Activated CD4-positive, alpha-beta T cell treated with anti-CD3 and anti-CD28 coated beads, Interleukin-2, amount 10 ng/mL, durations not matched to agents 24 days and 14 days (primary cell): ENCODE measurements at regions of chr3 and their contacts with region 1.

Region 1: DNA sequence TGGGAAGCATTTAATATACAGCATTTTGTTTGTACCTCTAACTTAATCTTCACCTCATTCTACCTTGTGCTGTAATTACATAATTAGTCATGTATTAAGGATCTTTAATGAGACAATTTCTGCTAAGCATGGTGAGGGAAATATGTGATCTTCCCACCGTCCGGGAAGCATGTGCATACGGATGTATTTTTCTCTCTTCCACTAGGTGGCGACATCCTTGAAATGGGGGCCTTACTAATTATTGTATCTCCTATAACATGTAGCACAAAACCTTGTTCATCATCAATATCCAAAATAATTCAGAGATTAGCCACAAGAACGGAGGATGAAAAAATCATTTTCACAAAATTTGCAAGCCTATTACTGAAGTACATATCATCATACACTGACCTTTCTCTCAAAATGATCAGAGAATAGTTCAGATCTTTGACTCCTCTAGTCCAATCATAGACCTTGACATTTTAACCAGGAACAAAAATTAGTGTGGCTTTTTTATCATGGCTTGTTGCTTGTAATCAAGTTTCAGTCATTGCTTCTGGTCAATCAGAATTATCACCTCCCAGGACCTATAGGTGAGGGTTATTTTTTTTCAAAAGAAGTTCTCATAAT is 148.9 kb upstream of the GBE1 start:
- DNase-seq: peak; percentile 71
- H3K4me3 Mint-ChIP-seq: no peak overlapping the region
- H3K27ac Mint-ChIP-seq: no peak overlapping the region
- H3K4me1 Mint-ChIP-seq: no peaks in the 10 kb centered on the region
- H3K27me3 Mint-ChIP-seq: no peaks in the 10 kb centered on the region

Region 2: GRCh38 chr3:81490541-81491288 is 419.6 kb before region 1 on chr3:
- intact Hi-C with region 1: loop called (anchors 10 kb)
- DNase-seq: peak; percentile 91
- H3K4me3 Mint-ChIP-seq: no peak overlapping the region
- H3K27ac Mint-ChIP-seq: no peak overlapping the region
- H3K4me1 Mint-ChIP-seq: peaks cover 2% of the 10 kb centered on the region
- H3K27me3 Mint-ChIP-seq: no peaks in the 10 kb centered on the region

Region 3: GRCh38 chr3:81666493-81667121 is 243.7 kb before region 1 on chr3:
- intact Hi-C with region 1: loop called (anchors 5 kb)
- DNase-seq: no peak
- H3K4me3 Mint-ChIP-seq: no peak overlapping the region
- H3K27ac Mint-ChIP-seq: no peak overlapping the region
- H3K4me1 Mint-ChIP-seq: peaks cover 8% of the 10 kb centered on the region
- H3K27me3 Mint-ChIP-seq: no peaks in the 10 kb centered on the region

Region 4: DNA sequence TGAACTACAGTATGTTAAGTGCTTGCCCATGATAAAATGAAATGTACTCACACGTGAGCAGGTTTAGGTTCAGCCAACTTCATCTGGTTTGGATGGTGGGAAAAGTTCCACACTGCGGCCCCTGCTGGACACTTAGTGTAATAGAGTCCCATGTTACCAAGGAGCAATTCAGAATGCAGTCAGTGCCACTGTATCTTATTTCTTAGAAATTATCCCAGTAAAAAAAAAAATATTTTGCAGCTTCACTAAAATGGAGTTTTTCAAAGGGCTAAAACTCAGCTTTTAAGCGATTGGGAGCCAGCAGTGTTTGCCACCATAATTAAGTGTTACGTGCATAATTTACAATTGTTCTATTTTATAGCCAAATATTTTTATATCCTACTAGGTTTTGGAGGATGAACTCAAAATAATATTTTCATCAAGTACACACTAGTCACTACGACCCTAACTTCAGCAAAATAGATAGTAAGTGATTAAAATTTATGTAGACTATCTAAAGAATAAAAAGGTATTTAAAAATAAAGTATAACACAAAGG is 222.8 kb after region 1 on chr3:
- intact Hi-C with region 1: loop called (anchors 5 kb)
- DNase-seq: peak; percentile 74
- H3K4me3 Mint-ChIP-seq: no peak overlapping the region
- H3K27ac Mint-ChIP-seq: no peak overlapping the region
- H3K4me1 Mint-ChIP-seq: no peaks in the 10 kb centered on the region
- H3K27me3 Mint-ChIP-seq: no peaks in the 10 kb centered on the region

Region 5: DNA sequence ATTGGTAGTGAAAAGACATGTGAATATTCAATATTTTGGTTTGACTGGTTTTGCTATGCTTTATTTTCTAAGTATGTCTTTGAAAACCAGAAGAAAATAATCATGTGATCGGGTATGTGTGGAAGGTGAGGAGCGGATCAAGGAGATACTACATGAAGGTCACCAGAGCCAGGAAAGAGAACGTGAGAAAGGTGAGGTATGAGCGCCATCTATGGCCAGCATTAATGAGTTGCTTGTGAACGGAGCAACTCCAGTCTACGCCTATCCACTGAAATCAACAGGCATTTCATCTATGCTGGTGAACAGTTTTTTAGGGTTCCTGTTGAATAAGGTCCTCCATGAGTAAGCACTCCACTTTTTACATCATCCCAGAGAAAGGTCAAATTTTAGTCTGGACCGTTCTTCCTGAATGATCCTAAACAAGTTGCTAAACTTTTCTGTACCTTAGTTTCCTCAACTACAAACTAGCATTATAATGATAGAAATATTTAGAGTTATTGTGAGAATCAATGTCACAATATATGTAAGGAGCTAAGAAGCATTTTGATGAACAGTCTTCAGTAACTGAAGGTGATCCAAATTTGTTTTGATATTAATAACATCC is 1613.2 kb after region 1 on chr3:
- intact Hi-C with region 1: loop called (anchors 5 kb)
- DNase-seq: no peak
- H3K4me3 Mint-ChIP-seq: no peak overlapping the region
- H3K27ac Mint-ChIP-seq: no peak overlapping the region
- H3K4me1 Mint-ChIP-seq: no peaks in the 10 kb centered on the region
- H3K27me3 Mint-ChIP-seq: no peaks in the 10 kb centered on the region